H1 (cell line): ENCODE measurements at regions of chr18 and their contacts with region 1.

Region 1: DNA sequence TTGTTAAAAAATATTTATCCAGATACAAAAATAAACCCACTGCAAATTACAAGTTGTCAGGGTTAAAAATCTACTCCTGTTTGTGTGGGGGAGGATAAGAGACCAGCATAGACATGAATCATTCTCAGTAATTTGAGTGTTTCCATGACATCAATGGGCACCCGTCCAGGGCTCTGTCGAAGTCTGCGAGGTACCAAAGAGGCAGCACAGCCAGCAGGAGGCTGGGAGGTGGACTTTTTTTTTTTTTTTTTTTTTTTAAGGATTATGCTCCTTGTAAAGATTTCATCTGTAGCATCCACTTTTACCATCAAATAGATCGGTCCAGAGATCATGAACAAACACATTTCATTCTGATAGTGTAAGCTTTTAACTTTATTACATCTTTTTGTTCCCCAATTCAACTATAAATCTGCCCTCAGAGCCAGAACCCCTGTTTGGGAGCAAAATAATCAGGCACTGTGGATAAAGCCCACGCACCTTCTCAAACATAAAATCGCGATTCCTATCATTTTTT is 182.0 kb downstream of the TCF4 start:
- DNase-seq: no peak
- H3K4me3 ChIP-seq: no peak overlapping the region
- H3K27ac ChIP-seq: no peak overlapping the region
- H3K4me1 ChIP-seq: peaks cover 3 to 20% (median 15%) of the 10 kb centered on the region in 4 experiments; a peak in 5 of 7 replicates
- H3K27me3 ChIP-seq: no peaks in the 10 kb centered on the region
- CTCF ChIP-seq: no peak
- EP300 ChIP-seq: no peak
- POLR2A ChIP-seq: no peak
- RAD21 ChIP-seq: no peak

Region 2: DNA sequence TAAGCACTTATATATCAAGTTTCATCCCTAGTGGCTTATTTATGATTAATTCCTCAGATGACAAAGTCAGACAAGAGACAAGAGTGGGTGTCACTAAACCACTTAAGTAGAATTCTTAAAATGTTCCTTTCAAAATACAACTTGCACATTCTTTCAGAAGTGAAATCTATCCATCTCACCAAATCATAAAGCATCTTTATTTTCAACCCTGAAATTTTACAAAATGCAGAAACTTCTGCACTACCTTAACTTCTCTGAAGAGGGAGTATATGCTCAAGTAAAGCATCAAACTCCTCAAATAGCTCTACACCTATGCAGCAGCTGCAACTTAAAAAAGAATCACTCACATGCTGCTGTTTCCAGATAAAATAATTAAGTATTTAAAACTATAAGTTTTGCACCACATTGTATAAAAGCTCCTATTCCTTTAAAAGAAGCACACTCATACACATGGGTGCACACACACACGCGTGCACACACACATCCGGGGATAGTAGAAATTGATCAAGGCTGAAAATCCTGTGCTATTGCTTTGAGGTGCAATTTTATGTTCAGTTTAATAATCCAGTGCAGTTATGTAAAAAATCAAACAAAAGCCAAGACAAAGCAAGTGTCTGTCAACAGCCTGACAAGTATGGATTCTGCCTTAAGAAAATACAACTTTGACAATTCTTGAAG is 62.4 kb before region 1 on chr18:
- CTCF ChIA-PET with region 1: interaction called, 12 read pairs
- POLR2A ChIA-PET with region 1: no interaction called
- DNase-seq: no peak
- H3K4me3 ChIP-seq: no peak overlapping the region
- H3K27ac ChIP-seq: no peak overlapping the region
- H3K4me1 ChIP-seq: peaks cover 6 to 16% (median 13%) of the 10 kb centered on the region in 4 experiments
- H3K27me3 ChIP-seq: no peaks in the 10 kb centered on the region
- CTCF ChIP-seq: peak in 2 of 3 experiments; percentile 10 to 50; a peak in 2 of 4 replicates
- EP300 ChIP-seq: no peak
- POLR2A ChIP-seq: no peak
- RAD21 ChIP-seq: peak; percentile 65 to 67

Region 3: GRCh38 chr18:55470826-55471225 is 64.9 kb after region 1 on chr18:
- CTCF ChIA-PET with region 1: no interaction called
- POLR2A ChIA-PET with region 1: no interaction called
- DNase-seq: no peak
- H3K4me3 ChIP-seq: no peak overlapping the region
- H3K27ac ChIP-seq: no peak overlapping the region
- H3K4me1 ChIP-seq: peaks cover 10 to 18% (median 15%) of the 10 kb centered on the region in 4 experiments; a peak in 6 of 7 replicates
- H3K27me3 ChIP-seq: no peaks in the 10 kb centered on the region
- CTCF ChIP-seq: no peak
- EP300 ChIP-seq: no peak
- POLR2A ChIP-seq: no peak
- RAD21 ChIP-seq: no peak

Region 4: DNA sequence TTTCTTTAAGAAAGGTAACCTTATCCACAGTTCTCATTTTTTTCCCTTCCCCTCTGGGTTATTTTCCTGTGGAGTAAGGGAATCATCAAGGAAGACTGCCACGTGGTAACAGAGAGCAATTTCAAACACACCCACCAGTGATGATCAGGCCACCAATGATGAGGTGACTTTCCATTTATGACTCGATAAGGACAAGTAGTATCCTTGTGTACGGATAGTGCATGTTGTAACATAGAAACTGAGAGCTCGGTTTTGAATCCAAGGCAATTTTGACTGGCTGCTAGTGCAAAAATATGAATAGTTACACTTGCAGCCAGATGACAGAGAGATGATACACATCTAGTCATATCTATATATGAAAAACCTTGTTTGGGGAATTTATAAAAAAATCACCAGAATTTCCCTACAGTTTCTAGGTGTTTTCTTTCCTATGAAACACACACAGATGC is 325.7 kb after region 1 on chr18:
- CTCF ChIA-PET with region 1: no interaction called
- POLR2A ChIA-PET with region 1: no interaction called
- DNase-seq: no peak
- H3K4me3 ChIP-seq: no peak overlapping the region
- H3K27ac ChIP-seq: no peak overlapping the region
- H3K4me1 ChIP-seq: no peaks in the 10 kb centered on the region
- H3K27me3 ChIP-seq: no peaks in the 10 kb centered on the region
- CTCF ChIP-seq: no peak
- EP300 ChIP-seq: no peak
- POLR2A ChIP-seq: no peak
- RAD21 ChIP-seq: no peak